CD4-positive, alpha-beta T cell (primary cell): ENCODE measurements at regions of chr2 and their contacts with region 1.

Region 1: GRCh38 chr2:95207111-95207961 is at the start of gene ZNF892:
- DNase-seq: peak; percentile 55 to 87 (median 74)
- ATAC-seq: peak; percentile 95
- H3K4me3 ChIP-seq: peak within 1 kb of the TSS; percentile 89
- H3K4me3 Mint-ChIP-seq: peak within 1 kb of the TSS; percentile 95
- H3K27ac ChIP-seq: peak within 1 kb of the TSS; percentile 63 to 77
- H3K27ac Mint-ChIP-seq: peak within 1 kb of the TSS; percentile 80
- H3K4me1 ChIP-seq: peaks cover 17% of the 10 kb centered on the region
- H3K4me1 Mint-ChIP-seq: peaks cover 29% of the 10 kb centered on the region
- H3K27me3 ChIP-seq: no peaks in the 10 kb centered on the region
- H3K27me3 Mint-ChIP-seq: no peaks in the 10 kb centered on the region
- CTCF ChIP-seq: peak; percentile 61
- total RNA-seq, gene ZNF892: 0.82 to 1.1 TPM

Region 2: DNA sequence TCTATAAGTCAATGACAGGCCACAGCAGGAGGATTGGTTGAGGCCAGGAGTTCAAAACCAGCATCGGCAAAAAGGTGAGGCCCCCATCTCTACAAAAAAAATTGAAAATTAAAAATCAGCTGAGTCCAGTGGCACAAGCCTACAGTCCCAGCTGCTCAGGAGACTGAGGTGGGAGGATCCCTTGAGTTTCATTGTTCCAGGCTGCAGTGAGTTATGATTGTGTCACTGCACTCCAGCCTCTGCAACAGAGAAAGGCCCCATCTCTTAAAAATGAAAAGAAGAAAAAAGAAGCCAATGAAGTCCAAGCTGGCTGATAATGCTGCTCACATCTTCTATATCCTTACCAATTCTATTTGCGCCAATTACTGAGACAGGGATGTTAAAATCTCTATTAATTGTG is 124.9 kb before region 1 on chr2:
- CTCF ChIA-PET with region 1: no interaction called
- POLR2A ChIA-PET with region 1: no interaction called
- intact Hi-C with region 1: loop called in 1 of 2 experiments (anchors 2 kb)
- DNase-seq: no peak
- ATAC-seq: no peak
- H3K4me3 ChIP-seq: no peak overlapping the region
- H3K4me3 Mint-ChIP-seq: no peak overlapping the region
- H3K27ac ChIP-seq: no peak overlapping the region
- H3K27ac Mint-ChIP-seq: peak overlapping the region; percentile 41
- H3K4me1 ChIP-seq: peaks cover 20% of the 10 kb centered on the region
- H3K4me1 Mint-ChIP-seq: peaks cover 25% of the 10 kb centered on the region
- H3K27me3 ChIP-seq: no peaks in the 10 kb centered on the region
- H3K27me3 Mint-ChIP-seq: no peaks in the 10 kb centered on the region
- CTCF ChIP-seq: no peak

Region 3: DNA sequence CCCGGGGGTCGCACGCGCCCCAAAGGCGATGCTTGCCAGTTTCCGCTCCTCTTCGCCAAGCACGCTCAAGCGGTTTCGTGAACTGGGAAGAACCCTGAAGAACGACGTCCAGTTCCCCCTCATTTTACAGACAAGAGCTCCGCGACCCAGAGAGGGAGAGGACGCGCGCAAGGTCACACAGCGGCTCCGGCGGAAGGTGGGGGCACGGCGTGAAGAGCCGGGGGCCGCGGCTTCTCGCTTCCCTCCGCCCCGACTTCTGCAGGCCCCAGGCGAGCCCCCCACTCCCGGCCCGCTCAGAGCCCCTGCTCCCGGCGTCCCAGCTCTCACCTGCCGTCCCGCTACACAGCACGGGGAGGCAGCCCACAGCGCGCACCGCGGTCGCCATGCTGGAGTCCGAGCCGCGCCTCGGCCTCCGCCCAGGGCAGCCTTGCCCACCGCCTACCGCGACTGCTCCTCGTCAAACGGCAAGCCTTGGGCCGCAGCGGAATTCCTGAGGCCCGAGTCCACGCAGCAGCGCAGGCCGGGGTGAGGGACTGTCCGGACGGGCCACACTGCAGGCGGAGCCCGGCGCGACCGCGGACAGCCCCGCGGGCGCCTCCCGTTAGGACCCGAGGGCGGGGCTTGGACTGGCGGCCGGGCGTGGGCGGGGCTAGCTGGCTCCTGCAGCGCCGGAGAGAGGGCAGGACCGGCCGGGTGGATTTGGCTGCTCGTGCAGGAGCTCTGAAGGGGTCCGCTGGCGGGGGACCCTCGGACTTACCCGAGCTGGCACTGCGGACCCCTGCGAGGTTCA is 85.7 kb before region 1 on chr2 and contains the start of gene MRPS5:
- CTCF ChIA-PET with region 1: no interaction called
- POLR2A ChIA-PET with region 1: no interaction called
- intact Hi-C with region 1: loop called in 1 of 2 experiments (anchors 2 kb)
- DNase-seq: peak; percentile 68 to 91 (median 82)
- ATAC-seq: peak; percentile 89
- H3K4me3 ChIP-seq: peak within 1 kb of the TSS; percentile 81
- H3K4me3 Mint-ChIP-seq: peak within 1 kb of the TSS; percentile 95
- H3K27ac ChIP-seq: peak within 1 kb of the TSS; percentile 59 to 74
- H3K27ac Mint-ChIP-seq: peak within 1 kb of the TSS; percentile 94
- H3K4me1 ChIP-seq: peaks cover 31% of the 10 kb centered on the region
- H3K4me1 Mint-ChIP-seq: peaks cover 52% of the 10 kb centered on the region
- H3K27me3 ChIP-seq: no peaks in the 10 kb centered on the region
- H3K27me3 Mint-ChIP-seq: no peaks in the 10 kb centered on the region
- CTCF ChIP-seq: no peak
- total RNA-seq, gene MRPS5: 15.3 to 16.3 TPM

Region 4: GRCh38 chr2:95185197-95185596 is 22.1 kb before region 1 on chr2:
- CTCF ChIA-PET with region 1: no interaction called
- POLR2A ChIA-PET with region 1: no interaction called
- intact Hi-C with region 1: no loop called
- DNase-seq: no peak
- ATAC-seq: no peak
- H3K4me3 ChIP-seq: no peak overlapping the region
- H3K4me3 Mint-ChIP-seq: no peak overlapping the region
- H3K27ac ChIP-seq: no peak overlapping the region
- H3K27ac Mint-ChIP-seq: no peak overlapping the region
- H3K4me1 ChIP-seq: no peaks in the 10 kb centered on the region
- H3K4me1 Mint-ChIP-seq: no peaks in the 10 kb centered on the region
- H3K27me3 ChIP-seq: no peaks in the 10 kb centered on the region
- H3K27me3 Mint-ChIP-seq: peaks cover 6% of the 10 kb centered on the region
- CTCF ChIP-seq: no peak

Region 5: GRCh38 chr2:95402370-95403203 is 195.3 kb after region 1 on chr2 and contains the start of gene FAHD2A:
- CTCF ChIA-PET with region 1: no interaction called
- POLR2A ChIA-PET with region 1: interaction called, 3 read pairs
- intact Hi-C with region 1: loop called in 1 of 2 experiments (anchors 5 kb)
- DNase-seq: peak; percentile 81 to 95 (median 92)
- ATAC-seq: peak; percentile 93
- H3K4me3 ChIP-seq: peak within 1 kb of the TSS; percentile 79
- H3K4me3 Mint-ChIP-seq: peak within 1 kb of the TSS; percentile 99
- H3K27ac ChIP-seq: peak within 1 kb of the TSS; percentile 41 to 57
- H3K27ac Mint-ChIP-seq: peak within 1 kb of the TSS; percentile 88
- H3K4me1 ChIP-seq: peaks cover 17% of the 10 kb centered on the region
- H3K4me1 Mint-ChIP-seq: peaks cover 27% of the 10 kb centered on the region
- H3K27me3 ChIP-seq: no peaks in the 10 kb centered on the region
- H3K27me3 Mint-ChIP-seq: no peaks in the 10 kb centered on the region
- CTCF ChIP-seq: no peak
- total RNA-seq, gene FAHD2A: 26.5 to 27.5 TPM